Activated naive CD4-positive, alpha-beta T cell treated with anti-CD3 and anti-CD28 coated beads for 36 hours (primary cell): ENCODE measurements at regions of chr11 and their contacts with region 1.

Region 1: GRCh38 chr11:66288671-66289547 is at the start of gene YIF1A:
- DNase-seq: peak; percentile 99
- H3K4me3 Mint-ChIP-seq: peak within 1 kb of the TSS; percentile 81
- H3K27ac Mint-ChIP-seq: peak within 1 kb of the TSS; percentile 70
- H3K4me1 Mint-ChIP-seq: peaks cover 35% of the 10 kb centered on the region
- H3K27me3 Mint-ChIP-seq: peaks cover 18% of the 10 kb centered on the region
- total RNA-seq, gene YIF1A: 45.9 to 49.7 TPM

Region 2: GRCh38 chr11:66317723-66318599 is 29.1 kb after region 1 on chr11:
- CTCF ChIA-PET with region 1: no interaction called
- intact Hi-C with region 1: no loop called
- DNase-seq: peak; percentile 71
- H3K4me3 Mint-ChIP-seq: peak overlapping the region; percentile 53
- H3K27ac Mint-ChIP-seq: peak overlapping the region; percentile 93
- H3K4me1 Mint-ChIP-seq: peaks cover 66% of the 10 kb centered on the region
- H3K27me3 Mint-ChIP-seq: no peaks in the 10 kb centered on the region

Region 3: GRCh38 chr11:66328307-66329144 is 39.6 kb after region 1 on chr11:
- CTCF ChIA-PET with region 1: interaction called, 3 read pairs
- intact Hi-C with region 1: loop called (anchors 1 kb)
- DNase-seq: peak; percentile 90
- H3K4me3 Mint-ChIP-seq: peak overlapping the region; percentile 34
- H3K27ac Mint-ChIP-seq: peak overlapping the region; percentile 74
- H3K4me1 Mint-ChIP-seq: peaks cover 38% of the 10 kb centered on the region
- H3K27me3 Mint-ChIP-seq: no peaks in the 10 kb centered on the region

Region 4: DNA sequence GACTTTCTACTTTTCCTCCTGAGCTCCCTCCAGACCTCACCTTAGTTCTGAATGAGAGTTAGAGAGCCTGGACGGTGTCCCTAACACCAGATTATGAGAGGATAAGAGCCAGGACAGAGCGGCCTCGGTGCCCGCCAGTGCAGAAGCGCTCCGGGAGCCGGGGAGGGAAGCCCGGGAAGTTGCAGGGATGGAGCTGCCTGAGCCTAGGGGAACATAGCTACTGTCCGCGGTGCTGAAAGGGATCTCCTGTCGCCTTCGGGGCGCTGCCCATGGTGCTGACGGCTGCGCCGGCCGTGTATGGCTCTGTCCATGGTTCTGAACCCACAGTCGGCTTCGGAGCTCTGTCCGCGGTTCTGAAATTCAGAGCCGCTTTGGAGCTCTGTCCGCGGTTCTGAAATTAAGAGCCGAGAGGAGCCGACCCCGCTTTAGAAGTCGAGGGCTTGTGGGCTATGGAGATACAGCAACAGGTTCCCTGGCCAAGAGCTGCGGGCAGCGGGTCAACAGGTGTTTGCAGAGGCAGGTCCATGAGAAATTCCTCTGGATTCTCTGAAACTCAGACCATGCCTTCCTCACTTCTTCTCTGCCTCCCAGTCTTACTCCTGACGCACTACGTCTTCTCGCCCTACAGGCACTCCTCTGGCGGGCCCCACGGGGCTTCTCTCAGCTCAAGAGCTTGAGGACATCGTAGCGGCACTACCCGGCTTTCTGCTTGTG is 132.7 kb after region 1 on chr11:
- CTCF ChIA-PET with region 1: interaction called, 6 read pairs
- intact Hi-C with region 1: loop called (anchors 1 kb)
- DNase-seq: peak; percentile 93
- H3K4me3 Mint-ChIP-seq: no peak overlapping the region
- H3K27ac Mint-ChIP-seq: no peak overlapping the region
- H3K4me1 Mint-ChIP-seq: peaks cover 28% of the 10 kb centered on the region
- H3K27me3 Mint-ChIP-seq: peaks cover 32% of the 10 kb centered on the region

Region 5: DNA sequence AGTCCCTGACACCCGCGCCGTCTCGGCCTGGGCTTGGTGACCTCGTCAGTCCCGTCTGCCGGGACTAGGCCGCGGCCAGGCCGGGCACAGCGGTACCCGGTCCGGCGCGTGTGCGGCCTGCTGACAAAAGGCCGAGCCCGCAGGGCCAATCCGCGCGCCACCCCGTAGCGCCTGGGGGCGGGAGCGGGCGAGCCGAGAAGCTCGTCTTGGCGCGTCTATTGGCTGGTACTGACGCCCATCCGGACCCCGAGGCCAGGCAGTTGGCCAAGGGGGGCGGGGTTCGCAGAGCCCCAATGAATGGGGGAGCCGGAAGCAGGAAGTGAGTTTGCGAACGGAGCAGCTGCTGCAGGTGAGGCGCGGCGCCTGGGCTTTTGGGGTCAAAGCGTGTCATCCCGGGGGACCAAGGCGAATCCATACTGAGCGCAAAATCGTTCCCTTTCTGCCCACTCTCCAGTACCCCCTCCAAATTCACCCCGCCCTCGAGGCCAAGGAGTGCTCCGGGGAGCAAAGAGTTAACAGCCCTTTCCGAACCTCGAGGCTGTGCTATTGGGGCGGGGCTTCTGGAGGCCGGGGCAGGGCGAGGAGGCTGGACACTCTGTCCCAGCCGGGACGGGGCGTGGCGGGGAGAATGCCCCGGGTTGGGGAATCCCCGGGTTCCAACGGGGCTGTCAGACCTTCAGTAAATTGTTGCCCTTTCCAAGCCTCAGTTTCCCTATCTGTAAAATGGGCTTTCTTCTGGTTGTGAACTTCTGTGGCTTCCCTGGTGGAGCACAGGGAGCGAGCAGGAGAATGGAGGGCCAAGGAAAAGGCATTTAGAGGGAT is 191.4 kb after region 1 on chr11 and contains the start of gene DPP3:
- CTCF ChIA-PET with region 1: no interaction called
- intact Hi-C with region 1: loop called (anchors 2 kb)
- DNase-seq: peak; percentile 97
- H3K4me3 Mint-ChIP-seq: peak within 1 kb of the TSS; percentile 89
- H3K27ac Mint-ChIP-seq: peak within 1 kb of the TSS; percentile 84
- H3K4me1 Mint-ChIP-seq: peaks cover 25% of the 10 kb centered on the region
- H3K27me3 Mint-ChIP-seq: no peaks in the 10 kb centered on the region
- total RNA-seq, gene DPP3: 73.8 to 80.1 TPM